BJ (cell line): ENCODE measurements at regions of chr14 and their contacts with region 1.

Region 1: GRCh38 chr14:20613094-20614037 is 22.2 kb upstream of the RNASE12 start:
- DNase-seq: peak; percentile 86
- H3K4me3 ChIP-seq: peak overlapping the region; percentile 47
- H3K27me3 ChIP-seq: no peaks in the 10 kb centered on the region; the same call in 1 of the 2 replicates
- CTCF ChIP-seq: peak; percentile 70

Region 2: GRCh38 chr14:20327005-20327869 is 286.1 kb before region 1 on chr14:
- CTCF ChIA-PET with region 1: interaction called, 43 read pairs
- POLR2A ChIA-PET with region 1: no interaction called
- DNase-seq: no peak
- H3K4me3 ChIP-seq: no peak overlapping the region
- H3K27me3 ChIP-seq: no peaks in the 10 kb centered on the region
- CTCF ChIP-seq: peak; percentile 67

Region 3: DNA sequence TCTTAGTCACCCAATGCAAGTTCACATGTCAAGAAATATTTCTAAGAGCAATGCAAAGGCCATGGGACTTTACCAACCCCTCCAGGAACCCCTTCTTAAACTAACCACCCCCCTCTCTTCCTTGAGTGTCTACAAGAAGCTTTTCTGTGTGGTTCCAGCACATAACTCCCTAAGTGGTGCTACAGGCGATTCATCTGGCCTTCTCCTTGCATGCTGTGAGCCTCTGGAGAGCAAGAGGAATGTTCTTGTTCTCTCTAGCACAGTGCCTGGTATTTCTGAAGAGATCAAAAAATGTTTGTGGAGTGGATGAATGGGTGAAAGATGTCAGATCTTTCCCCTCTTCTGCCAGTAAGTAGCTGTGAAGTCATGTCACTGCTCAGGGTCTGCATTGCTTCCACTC is 16.3 kb before region 1 on chr14:
- CTCF ChIA-PET with region 1: interaction called, 17 read pairs
- POLR2A ChIA-PET with region 1: no interaction called
- DNase-seq: no peak
- H3K4me3 ChIP-seq: no peak overlapping the region
- H3K27me3 ChIP-seq: 0 out of 2 replicates have a peak, but pooled peaks cover 1% of the 10 kb centered on the region
- CTCF ChIP-seq: no peak

Region 4: DNA sequence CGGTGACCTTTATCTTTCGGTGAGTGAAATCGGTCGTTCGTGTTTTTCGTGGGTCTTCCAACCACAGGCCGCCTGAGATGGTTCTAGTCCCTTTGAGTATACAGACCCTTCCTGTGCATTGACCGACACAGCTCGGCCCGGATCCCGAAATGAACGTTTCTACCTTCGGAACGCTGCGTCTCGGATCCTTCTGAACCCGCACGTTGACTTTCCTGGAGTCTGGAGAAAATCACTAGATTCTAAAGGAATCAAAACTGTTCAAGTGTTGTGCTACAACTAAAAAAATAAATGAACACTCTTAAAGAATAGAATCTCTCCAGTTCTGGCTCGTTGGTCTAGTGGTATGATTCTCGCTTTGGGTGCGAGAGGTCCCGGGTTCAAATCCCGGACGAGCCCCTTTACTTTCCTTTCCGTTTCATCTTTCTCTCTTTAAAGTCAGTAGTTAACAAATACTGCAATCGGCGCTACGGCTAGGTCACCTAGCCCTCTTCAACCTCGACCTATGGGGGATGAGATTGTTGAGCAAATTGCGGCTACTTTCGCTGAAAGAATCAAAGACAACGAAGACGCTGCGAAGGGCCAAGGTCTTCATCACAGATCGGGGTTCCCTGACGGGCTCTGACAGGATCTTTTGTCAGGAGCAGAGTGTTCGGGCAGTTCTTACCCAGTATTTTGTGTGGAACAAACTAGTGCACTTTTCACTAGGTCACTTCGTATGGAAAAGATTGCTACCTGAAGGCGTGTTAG is 19.5 kb after region 1 on chr14:
- CTCF ChIA-PET with region 1: interaction called, 13 read pairs
- POLR2A ChIA-PET with region 1: no interaction called
- DNase-seq: no peak
- H3K4me3 ChIP-seq: peak overlapping the region; percentile 11
- H3K27me3 ChIP-seq: peaks cover 3% of the 10 kb centered on the region
- CTCF ChIP-seq: no peak

Region 5: DNA sequence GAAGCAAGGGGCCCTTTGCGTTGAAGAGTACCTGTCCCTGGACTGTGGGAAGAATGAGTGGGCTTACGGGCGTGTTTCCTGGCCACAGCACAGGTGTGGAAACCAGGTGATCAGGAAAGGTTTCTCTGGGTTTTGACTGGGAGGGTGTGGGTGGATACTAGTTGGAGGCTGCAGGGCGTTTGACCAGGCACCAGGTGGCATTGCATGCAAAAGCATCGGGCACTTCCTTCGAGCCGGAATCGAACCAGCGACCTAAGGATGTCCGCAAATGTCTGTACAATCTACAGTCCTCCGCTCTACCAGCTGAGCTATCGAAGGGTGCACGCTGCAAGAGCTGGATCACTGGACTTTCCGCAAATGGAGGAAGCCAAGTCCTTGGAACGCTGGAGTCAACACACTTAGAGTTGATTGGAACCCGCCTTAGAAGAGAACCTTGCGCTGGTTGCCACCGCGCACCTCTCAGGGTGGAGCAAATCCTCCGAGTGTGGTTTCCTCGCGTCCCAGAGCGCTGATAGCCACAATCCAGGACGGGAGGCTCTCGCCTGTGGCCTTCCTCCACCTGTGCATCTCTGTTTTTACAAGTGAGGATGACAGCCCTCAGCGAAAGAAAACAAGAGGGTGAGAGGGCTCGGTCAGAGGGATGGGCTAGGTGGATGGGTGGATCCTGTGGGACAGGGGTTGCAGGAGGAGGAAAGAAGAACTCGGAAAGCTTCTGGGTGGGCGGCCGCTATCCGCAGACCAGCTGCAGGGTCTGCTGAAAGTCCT is 49.8 kb after region 1 on chr14:
- CTCF ChIA-PET with region 1: no interaction called
- POLR2A ChIA-PET with region 1: no interaction called
- DNase-seq: no peak
- H3K4me3 ChIP-seq: no peak overlapping the region
- H3K27me3 ChIP-seq: 0 out of 2 replicates have a peak, but pooled peaks cover 4% of the 10 kb centered on the region
- CTCF ChIP-seq: peak; percentile 39

Region 6: GRCh38 chr14:20682435-20683124 is 69.2 kb after region 1 on chr14:
- CTCF ChIA-PET with region 1: interaction called, 18 read pairs
- POLR2A ChIA-PET with region 1: interaction called, 3 read pairs
- DNase-seq: no peak
- H3K4me3 ChIP-seq: peak overlapping the region; percentile 79
- H3K27me3 ChIP-seq: no peaks in the 10 kb centered on the region
- CTCF ChIP-seq: 0 out of 2 replicates have a peak, but pooled peaks have one; percentile 13

Region 7: GRCh38 chr14:20690848-20691523 is 77.6 kb after region 1 on chr14:
- CTCF ChIA-PET with region 1: interaction called, 18 read pairs
- POLR2A ChIA-PET with region 1: no interaction called
- DNase-seq: no peak
- H3K4me3 ChIP-seq: no peak overlapping the region
- H3K27me3 ChIP-seq: no peaks in the 10 kb centered on the region
- CTCF ChIP-seq: peak; percentile 80